ENCODE measurements at regions of chr4 and their contacts with region 1.

Region 1: GRCh38 chr4:43864616-43865146 is 583.9 kb downstream of the KCTD8 start:
- DNase-seq: no peak
- ATAC-seq: no peak
- H3K4me3 ChIP-seq: no peak overlapping the region
- H3K27ac ChIP-seq: no peak overlapping the region
- H3K4me1 ChIP-seq: no peaks in the 10 kb centered on the region
- H3K27me3 ChIP-seq: no peaks in the 10 kb centered on the region

Region 2: DNA sequence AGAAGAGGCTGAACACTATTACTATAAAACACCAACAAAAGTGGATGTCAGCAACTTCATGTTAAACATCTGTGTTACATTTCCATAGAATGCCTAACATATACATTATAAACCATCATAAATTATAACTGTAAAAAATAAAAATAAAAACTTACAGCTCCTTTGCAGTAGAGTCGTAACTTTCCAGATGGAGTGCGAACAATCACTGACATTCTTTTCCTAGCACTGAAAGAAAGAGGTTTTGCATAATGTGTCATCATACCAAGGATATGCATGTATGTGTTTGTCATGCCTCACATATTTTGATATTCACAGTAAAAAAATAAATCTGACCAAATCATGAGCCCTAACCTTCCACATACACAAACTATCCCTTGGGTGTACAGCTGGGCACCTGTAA is 1320.9 kb before region 1 on chr4:
- intact Hi-C with region 1: loop called in 1 of 2 experiments (anchors 10 kb)
- DNase-seq: no peak
- ATAC-seq: no peak
- H3K4me3 ChIP-seq: no peak overlapping the region
- H3K27ac ChIP-seq: no peak overlapping the region
- H3K4me1 ChIP-seq: no peaks in the 10 kb centered on the region
- H3K27me3 ChIP-seq: no peaks in the 10 kb centered on the region

Region 3: DNA sequence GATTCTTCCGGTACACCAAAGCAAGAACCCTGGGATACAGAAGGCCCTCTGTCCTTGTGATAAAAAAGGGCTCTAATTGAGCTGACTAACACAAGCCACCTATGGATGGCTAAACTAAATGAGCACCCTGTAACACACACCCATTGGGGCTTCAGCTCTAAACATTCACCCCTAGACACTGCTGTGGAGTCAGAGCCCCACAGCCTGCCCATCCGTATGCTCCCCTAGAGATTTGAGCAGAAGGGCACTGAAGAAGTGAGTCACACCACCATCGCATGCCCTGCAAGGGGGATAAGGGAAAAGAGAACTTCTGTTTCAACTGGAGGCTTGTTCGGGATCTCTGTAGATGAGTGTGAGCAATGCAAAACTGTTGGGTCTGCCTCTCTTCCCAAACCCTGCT is 38.8 kb after region 1 on chr4:
- intact Hi-C with region 1: no loop called
- DNase-seq: no peak
- ATAC-seq: no peak
- H3K4me3 ChIP-seq: no peak overlapping the region
- H3K27ac ChIP-seq: no peak overlapping the region
- H3K4me1 ChIP-seq: no peaks in the 10 kb centered on the region
- H3K27me3 ChIP-seq: no peaks in the 10 kb centered on the region